ENCODE measurements at regions of chr5 and their contacts with region 1.

Region 1: DNA sequence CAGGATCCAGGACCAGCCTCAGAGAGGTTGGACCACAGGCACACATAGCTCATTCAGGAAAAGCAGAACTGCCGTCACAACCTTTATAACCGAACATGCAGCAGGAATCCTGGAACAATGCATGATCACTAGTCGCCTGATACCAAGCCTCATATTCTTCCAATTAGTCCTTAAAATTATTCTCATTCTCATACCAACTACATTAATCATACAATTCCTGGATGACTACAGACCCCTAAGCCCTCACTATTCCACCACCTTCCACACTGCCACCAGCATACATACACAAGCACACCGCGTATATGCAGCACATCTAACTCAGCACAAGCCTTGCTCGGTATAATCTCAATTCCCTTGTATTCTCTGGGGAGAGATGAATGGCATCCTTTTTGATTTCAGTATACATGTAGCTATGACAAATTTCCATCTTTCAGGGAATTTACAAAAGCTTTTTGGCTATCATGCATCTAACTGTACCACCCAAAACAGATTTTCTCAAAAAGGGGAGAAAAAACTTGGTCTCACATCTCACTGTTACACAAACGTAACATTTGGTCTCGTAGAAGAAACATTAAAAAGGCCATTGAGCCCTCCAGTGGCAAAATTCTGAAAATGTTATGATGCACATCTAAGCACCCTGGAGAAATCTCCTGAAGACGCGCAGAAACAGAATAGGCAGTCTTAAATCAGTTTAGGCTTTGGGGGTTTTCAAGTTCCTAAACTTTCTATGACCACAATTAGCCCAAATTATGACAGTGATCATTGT is 46.2 kb downstream of the MCTP1 start:
- DNase-seq: no peak
- H3K4me3 ChIP-seq: no peak overlapping the region
- H3K27ac ChIP-seq: no peak overlapping the region
- H3K4me1 ChIP-seq: no peaks in the 10 kb centered on the region
- H3K27me3 ChIP-seq: no peaks in the 10 kb centered on the region
- CTCF ChIP-seq: no peak
- EP300 ChIP-seq: no peak
- POLR2A ChIP-seq: no peak

Region 2: DNA sequence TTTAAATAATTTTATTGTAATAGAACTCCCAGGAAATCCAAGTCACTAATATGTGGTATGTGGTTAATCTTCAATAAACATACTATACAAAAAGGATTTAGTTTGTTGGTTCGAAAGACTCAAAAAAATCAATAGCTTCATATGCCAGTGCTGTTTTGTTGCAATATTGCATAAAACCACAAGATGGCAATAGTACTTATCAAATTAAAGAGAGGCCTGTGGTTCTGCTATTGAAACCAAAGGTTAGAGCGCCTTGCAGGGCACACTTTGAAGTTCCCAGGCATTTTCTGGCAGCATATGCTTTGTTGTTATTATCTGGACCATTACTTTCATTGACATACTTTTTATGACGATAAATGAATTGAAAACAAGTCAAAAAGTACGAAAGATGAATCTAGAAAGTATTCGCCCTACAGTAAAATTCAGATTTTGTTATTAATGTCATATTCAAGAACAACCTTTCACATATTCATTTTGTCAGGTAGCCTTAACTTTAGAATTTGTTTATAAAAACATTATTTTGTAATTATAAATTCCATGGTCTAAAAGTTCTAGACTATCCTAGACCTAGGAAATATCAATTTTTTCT is 270.1 kb before region 1 on chr5:
- intact Hi-C with region 1: loop called (anchors 10 kb)
- DNase-seq: no peak
- H3K4me3 ChIP-seq: no peak overlapping the region
- H3K27ac ChIP-seq: no peak overlapping the region
- H3K4me1 ChIP-seq: no peaks in the 10 kb centered on the region
- H3K27me3 ChIP-seq: no peaks in the 10 kb centered on the region
- CTCF ChIP-seq: peak; percentile 18 to 57 (median 44)
- EP300 ChIP-seq: no peak
- POLR2A ChIP-seq: no peak

Region 3: DNA sequence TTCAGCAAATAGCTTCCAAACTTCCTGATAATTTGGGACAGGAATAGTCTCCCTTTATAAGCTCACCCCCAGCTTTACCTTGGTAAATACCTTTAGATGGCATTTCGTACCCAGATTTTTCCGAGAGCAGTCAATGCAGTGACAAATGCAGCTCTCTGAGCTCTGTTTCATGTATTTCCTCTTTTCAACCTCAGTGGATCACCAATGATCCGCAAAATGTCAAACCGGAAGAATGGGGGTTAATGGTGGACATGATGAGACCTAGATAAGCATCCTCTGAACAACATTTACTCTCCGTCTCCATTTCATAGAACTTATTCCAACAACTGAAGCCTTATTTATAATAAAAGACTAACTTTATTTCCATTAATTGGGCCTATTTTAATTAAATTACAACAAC is 181.1 kb before region 1 on chr5:
- intact Hi-C with region 1: no loop called
- DNase-seq: no peak
- H3K4me3 ChIP-seq: no peak overlapping the region
- H3K27ac ChIP-seq: no peak overlapping the region
- H3K4me1 ChIP-seq: no peaks in the 10 kb centered on the region
- H3K27me3 ChIP-seq: no peaks in the 10 kb centered on the region
- CTCF ChIP-seq: no peak
- EP300 ChIP-seq: no peak
- POLR2A ChIP-seq: no peak

Measured in sigmoid colon (tissue), 7 donors.